B cell (primary cell): ENCODE measurements at regions of chr14 and their contacts with region 1.

Region 1: GRCh38 chr14:52552063-52552988 is at the starts of genes GPR137C and TXNDC16:
- DNase-seq: peak; percentile 100
- ATAC-seq: peak; percentile 87
- H3K4me3 ChIP-seq: peak within 1 kb of the TSS; percentile 52 to 88 (median 82)
- H3K4me3 Mint-ChIP-seq: peak within 1 kb of the TSS; percentile 97
- H3K27ac ChIP-seq: peak within 1 kb of the TSS; percentile 77 to 89
- H3K27ac Mint-ChIP-seq: peak within 1 kb of the TSS; percentile 88
- H3K4me1 ChIP-seq: peaks cover 16 to 24% of the 10 kb centered on the region in 2 donors
- H3K4me1 Mint-ChIP-seq: peaks cover 20% of the 10 kb centered on the region
- H3K27me3 ChIP-seq: peaks cover 0 to 13% (median 13%) of the 10 kb centered on the region in 4 experiments
- H3K27me3 Mint-ChIP-seq: peaks cover 10% of the 10 kb centered on the region
- CTCF ChIP-seq: peak; percentile 6
- total RNA-seq, gene GPR137C: 0.67 and 0.95 TPM in 2 replicates
- total RNA-seq, gene TXNDC16: 5.2 and 7.0 TPM in 2 replicates

Region 2: GRCh38 chr14:51094901-51095853 is 1457.1 kb before region 1 on chr14 and contains the start of gene TRIM9:
- CTCF ChIA-PET with region 1: no interaction called
- POLR2A ChIA-PET with region 1: no interaction called
- intact Hi-C with region 1: loop called (anchors 5 kb)
- DNase-seq: peak; percentile 95
- ATAC-seq: peak; percentile 97
- H3K4me3 ChIP-seq: peak within 1 kb of the TSS; percentile 58 to 83 (median 80)
- H3K4me3 Mint-ChIP-seq: peak within 1 kb of the TSS; percentile 95
- H3K27ac ChIP-seq: no peak within 1 kb of the TSS
- H3K27ac Mint-ChIP-seq: peak within 1 kb of the TSS; percentile 75
- H3K4me1 ChIP-seq: peaks cover 21 to 24% of the 10 kb centered on the region in 2 donors
- H3K4me1 Mint-ChIP-seq: peaks cover 23% of the 10 kb centered on the region
- H3K27me3 ChIP-seq: peaks cover 0 to 33% (median 16%) of the 10 kb centered on the region in 4 experiments
- H3K27me3 Mint-ChIP-seq: peaks cover 37% of the 10 kb centered on the region
- CTCF ChIP-seq: no peak
- total RNA-seq, gene TRIM9: 0.32 TPM in 2 replicates

Region 3: DNA sequence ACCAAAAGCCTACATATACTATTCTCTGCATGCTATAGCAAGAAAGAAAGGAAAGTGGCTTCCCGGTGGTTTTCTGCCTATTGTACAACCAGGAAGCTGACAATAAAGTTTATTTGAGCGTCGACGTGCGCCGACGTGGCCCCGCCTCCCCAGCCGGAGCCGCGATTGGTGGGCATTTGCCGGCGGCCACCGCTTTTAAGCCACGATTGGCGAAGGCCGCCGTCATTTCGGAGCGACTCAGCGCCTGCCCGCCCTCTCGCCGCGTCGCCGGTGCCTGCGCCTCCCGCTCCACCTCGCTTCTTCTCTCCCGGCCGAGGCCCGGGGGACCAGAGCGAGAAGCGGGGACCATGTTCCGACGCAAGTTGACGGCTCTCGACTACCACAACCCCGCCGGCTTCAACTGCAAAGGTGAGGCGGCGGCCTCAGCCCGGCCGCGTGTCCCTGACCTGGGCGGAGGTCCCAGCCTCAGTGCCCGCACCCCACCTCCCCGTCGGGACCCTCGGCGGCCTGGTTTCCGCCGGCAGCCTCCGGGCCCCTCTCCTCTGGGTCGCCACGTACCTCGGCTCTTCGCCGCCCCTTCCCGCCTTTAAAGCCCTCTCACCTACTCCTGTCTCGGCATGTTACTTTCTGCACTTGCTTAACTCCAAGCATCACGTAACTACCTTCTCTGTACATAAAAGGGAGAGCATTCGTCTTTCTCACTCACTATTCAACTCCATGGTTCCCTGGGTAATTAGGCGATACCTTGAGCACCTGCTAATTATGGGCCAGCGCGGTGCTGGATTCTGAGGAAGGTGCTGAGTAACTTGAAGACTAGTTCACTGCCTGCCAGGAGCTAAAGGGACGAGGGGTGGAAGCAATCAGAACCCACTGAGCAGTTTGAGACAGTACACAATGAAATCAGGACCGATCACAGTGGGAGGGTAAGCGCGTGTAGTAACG is 562.8 kb before region 1 on chr14 and contains the start of gene RTRAF:
- CTCF ChIA-PET with region 1: no interaction called
- POLR2A ChIA-PET with region 1: no interaction called
- intact Hi-C with region 1: loop called (anchors 1 kb)
- DNase-seq: peak; percentile 95
- ATAC-seq: peak; percentile 96
- H3K4me3 ChIP-seq: peak within 1 kb of the TSS; percentile 72 to 94 (median 77)
- H3K4me3 Mint-ChIP-seq: peak within 1 kb of the TSS; percentile 98
- H3K27ac ChIP-seq: peak within 1 kb of the TSS; percentile 67 to 95
- H3K27ac Mint-ChIP-seq: peak within 1 kb of the TSS; percentile 91
- H3K4me1 ChIP-seq: peaks cover 15 to 24% of the 10 kb centered on the region in 2 donors
- H3K4me1 Mint-ChIP-seq: peaks cover 34% of the 10 kb centered on the region
- H3K27me3 ChIP-seq: no peaks in the 10 kb centered on the region
- H3K27me3 Mint-ChIP-seq: no peaks in the 10 kb centered on the region
- CTCF ChIP-seq: no peak
- total RNA-seq, gene RTRAF: 91.1 and 94.2 TPM in 2 replicates

Region 4: GRCh38 chr14:52325126-52325525 is 227.2 kb before region 1 on chr14:
- CTCF ChIA-PET with region 1: no interaction called
- POLR2A ChIA-PET with region 1: no interaction called
- intact Hi-C with region 1: loop called (anchors 2 kb)
- DNase-seq: peak; percentile 76
- ATAC-seq: peak; percentile 96
- H3K4me3 ChIP-seq: no peak overlapping the region
- H3K4me3 Mint-ChIP-seq: peak overlapping the region; percentile 33
- H3K27ac ChIP-seq: no peak overlapping the region
- H3K27ac Mint-ChIP-seq: peak overlapping the region; percentile 69
- H3K4me1 ChIP-seq: peaks cover 22 to 23% of the 10 kb centered on the region in 2 donors
- H3K4me1 Mint-ChIP-seq: peaks cover 23% of the 10 kb centered on the region
- H3K27me3 ChIP-seq: peaks cover 0 to 19% (median 13%) of the 10 kb centered on the region in 4 experiments
- H3K27me3 Mint-ChIP-seq: peaks cover 28% of the 10 kb centered on the region
- CTCF ChIP-seq: no peak

Region 5: DNA sequence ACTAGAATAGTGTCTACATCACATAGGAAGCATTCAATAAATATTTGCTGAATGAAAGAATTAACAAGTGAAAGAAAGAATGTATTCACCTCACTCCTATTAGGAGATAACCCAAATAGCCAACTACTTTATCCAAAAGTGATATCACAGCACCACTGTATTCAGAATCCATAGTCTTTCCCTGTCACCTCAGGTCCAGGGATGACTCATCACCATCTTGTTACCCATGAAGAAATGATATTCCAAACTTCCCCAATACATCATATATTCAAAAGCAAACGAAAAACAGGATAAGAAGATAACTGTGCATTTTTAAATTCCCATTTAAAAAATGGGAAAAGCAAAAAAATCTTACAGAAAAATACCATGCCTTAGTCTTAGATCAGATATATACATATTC is 39.1 kb before region 1 on chr14:
- CTCF ChIA-PET with region 1: no interaction called
- POLR2A ChIA-PET with region 1: no interaction called
- intact Hi-C with region 1: no loop called
- DNase-seq: no peak
- ATAC-seq: no peak
- H3K4me3 ChIP-seq: no peak overlapping the region
- H3K4me3 Mint-ChIP-seq: no peak overlapping the region
- H3K27ac ChIP-seq: no peak overlapping the region
- H3K27ac Mint-ChIP-seq: no peak overlapping the region
- H3K4me1 ChIP-seq: no peaks in the 10 kb centered on the region
- H3K4me1 Mint-ChIP-seq: no peaks in the 10 kb centered on the region
- H3K27me3 ChIP-seq: no peaks in the 10 kb centered on the region
- H3K27me3 Mint-ChIP-seq: no peaks in the 10 kb centered on the region
- CTCF ChIP-seq: no peak

Region 6: DNA sequence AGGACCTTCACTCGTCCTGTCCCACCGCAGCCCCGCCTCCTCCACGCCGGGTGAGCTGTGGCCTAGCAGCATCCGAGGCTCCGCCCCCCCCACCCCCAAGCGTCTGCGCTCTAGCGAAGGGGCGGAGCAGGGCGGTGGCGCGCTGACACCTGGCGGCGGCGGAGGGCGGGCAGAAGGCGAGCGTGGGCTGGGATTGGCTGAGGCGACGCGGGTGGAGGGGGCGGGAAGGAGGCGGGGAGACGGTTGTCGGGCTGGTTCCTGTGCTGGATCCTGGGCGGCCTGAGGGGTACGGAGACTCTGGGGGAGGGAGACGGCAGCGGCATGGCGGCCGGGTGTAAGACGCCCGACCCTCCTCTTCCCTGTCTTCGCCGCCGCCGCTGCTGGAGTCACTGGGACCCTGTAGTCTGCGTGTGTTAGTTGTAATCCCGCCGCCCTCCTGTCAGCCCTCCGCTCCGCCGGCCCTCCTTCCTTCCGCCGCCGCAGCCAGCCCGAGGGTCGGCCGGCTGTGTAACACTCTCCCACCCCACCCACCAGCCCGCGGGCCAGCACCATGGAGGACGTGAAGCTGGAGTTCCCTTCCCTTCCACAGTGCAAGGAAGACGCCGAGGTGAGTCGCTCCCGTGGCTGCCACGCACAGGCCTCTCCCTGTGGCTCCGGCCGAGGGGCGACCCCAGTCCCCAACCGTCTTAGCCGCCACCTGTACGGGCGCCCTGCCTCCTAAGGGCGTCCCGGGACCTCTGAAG is 177.8 kb after region 1 on chr14 and contains the start of gene STYX:
- CTCF ChIA-PET with region 1: no interaction called
- POLR2A ChIA-PET with region 1: no interaction called
- intact Hi-C with region 1: loop called (anchors 1 kb)
- DNase-seq: peak; percentile 98
- ATAC-seq: peak; percentile 96
- H3K4me3 ChIP-seq: peak within 1 kb of the TSS; percentile 75 to 99 (median 84)
- H3K4me3 Mint-ChIP-seq: peak within 1 kb of the TSS; percentile 93
- H3K27ac ChIP-seq: peak within 1 kb of the TSS; percentile 73 to 87
- H3K27ac Mint-ChIP-seq: peak within 1 kb of the TSS; percentile 93
- H3K4me1 ChIP-seq: peaks cover 14 to 16% of the 10 kb centered on the region in 2 donors
- H3K4me1 Mint-ChIP-seq: peaks cover 41% of the 10 kb centered on the region
- H3K27me3 ChIP-seq: no peaks in the 10 kb centered on the region
- H3K27me3 Mint-ChIP-seq: no peaks in the 10 kb centered on the region
- CTCF ChIP-seq: no peak
- total RNA-seq, gene STYX: 15.5 and 15.7 TPM in 2 replicates

Region 7: DNA sequence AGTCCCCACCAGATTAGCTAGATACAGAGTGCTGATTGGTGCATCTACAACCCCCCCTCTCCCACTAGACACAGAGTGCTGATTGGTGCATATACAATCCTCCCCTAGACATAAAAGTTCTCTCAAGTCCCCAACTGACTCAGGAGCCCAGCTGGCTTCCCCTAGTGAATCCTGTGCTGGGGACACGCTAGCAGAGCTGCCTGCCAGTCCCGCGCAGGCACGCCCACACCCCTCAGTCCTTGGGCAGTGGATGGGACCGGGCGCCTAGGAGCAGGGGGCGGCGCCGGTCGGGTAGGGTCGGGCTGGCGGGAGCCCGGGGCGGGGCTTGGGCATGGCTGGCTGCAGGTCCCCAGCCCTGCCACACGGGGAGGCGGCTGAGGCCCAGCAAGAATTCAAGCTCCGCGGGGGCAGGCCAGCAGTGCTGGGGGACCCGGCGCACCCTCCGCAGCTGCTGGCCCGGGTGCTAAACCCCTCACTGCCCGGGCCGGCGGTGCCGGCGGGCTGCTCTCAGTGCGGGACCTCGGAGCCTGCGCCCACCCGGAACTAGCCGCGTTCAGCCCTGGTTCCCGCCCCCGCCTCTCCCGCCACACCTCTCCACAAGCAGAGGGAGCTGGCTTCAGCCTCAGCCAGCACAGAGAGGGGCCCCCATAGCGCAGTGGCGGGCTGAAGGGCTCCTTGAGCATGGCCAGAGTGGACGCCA is 665.1 kb after region 1 on chr14:
- CTCF ChIA-PET with region 1: no interaction called
- POLR2A ChIA-PET with region 1: no interaction called
- intact Hi-C with region 1: loop called (anchors 1 kb)
- DNase-seq: peak; percentile 82
- ATAC-seq: peak; percentile 98
- H3K4me3 ChIP-seq: peak overlapping the region in 4 of 5 experiments; percentile 48 to 68 (median 63)
- H3K4me3 Mint-ChIP-seq: peak overlapping the region; percentile 93
- H3K27ac ChIP-seq: peak overlapping the region in 1 of 2 donors; percentile 2
- H3K27ac Mint-ChIP-seq: peak overlapping the region; percentile 86
- H3K4me1 ChIP-seq: peaks cover 6 to 8% of the 10 kb centered on the region in 2 donors
- H3K4me1 Mint-ChIP-seq: peaks cover 8% of the 10 kb centered on the region
- H3K27me3 ChIP-seq: no peaks in the 10 kb centered on the region
- H3K27me3 Mint-ChIP-seq: no peaks in the 10 kb centered on the region
- CTCF ChIP-seq: peak; percentile 65